ENCODE measurements at regions of chr4 and their contacts with region 1.

Region 1: GRCh38 chr4:165327211-165328100 is at the start of gene MSMO1:
- DNase-seq: peak; percentile 99
- H3K4me3 ChIP-seq: peak within 1 kb of the TSS; percentile 90
- H3K27ac ChIP-seq: peak within 1 kb of the TSS; percentile 73
- H3K4me1 ChIP-seq: peaks cover 46% of the 10 kb centered on the region
- CTCF ChIP-seq: no peak
- total RNA-seq, gene MSMO1: 36.3 and 41.6 TPM in 2 replicates

Region 2: GRCh38 chr4:164320847-164321246 is 1006.6 kb before region 1 on chr4:
- CTCF ChIA-PET with region 1: no interaction called
- POLR2A ChIA-PET with region 1: no interaction called
- intact Hi-C with region 1: no loop called
- DNase-seq: no peak
- H3K4me3 ChIP-seq: no peak overlapping the region
- H3K27ac ChIP-seq: no peak overlapping the region
- H3K4me1 ChIP-seq: no peaks in the 10 kb centered on the region
- CTCF ChIP-seq: peak; percentile 23; the same call in 1 of the 2 replicates

Region 3: DNA sequence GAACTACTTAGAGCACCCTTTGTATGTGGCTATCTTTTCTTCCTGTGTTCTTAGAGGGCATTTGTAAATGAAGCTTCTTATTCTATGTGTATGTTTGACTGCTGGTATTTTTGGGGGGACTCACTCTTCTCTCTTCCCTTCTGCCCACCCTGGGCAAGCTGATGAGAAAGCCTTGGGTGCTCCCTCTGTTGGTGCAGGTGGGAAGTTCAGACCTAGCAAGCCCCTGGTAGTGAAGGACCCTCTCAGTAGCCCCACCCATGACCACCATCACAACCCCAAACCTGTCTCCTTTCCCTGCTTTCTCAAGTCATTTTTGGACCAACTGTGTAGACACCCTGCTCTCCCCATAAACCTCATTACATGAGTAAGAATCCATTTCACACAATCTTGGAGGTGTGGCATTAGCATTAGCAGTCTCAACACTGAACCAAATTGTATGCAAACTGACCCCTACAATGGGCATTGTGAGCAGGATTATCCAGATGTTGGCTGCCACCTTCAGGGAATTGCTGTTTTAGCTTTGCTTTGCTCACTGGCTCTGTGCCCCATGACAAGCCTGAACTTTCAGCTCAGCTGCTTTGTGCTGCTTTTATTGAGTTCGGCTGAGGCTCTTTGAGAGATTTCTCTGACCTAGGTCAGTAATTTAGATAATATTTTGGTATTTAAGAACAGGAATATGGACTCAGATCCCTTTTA is 377.9 kb before region 1 on chr4:
- CTCF ChIA-PET with region 1: no interaction called
- POLR2A ChIA-PET with region 1: no interaction called
- intact Hi-C with region 1: loop called (anchors 10 kb)
- DNase-seq: peak; percentile 44
- H3K4me3 ChIP-seq: peak overlapping the region; percentile 12
- H3K27ac ChIP-seq: peak overlapping the region; percentile 41
- H3K4me1 ChIP-seq: peaks cover 38% of the 10 kb centered on the region
- CTCF ChIP-seq: peak; percentile 72

Region 4: DNA sequence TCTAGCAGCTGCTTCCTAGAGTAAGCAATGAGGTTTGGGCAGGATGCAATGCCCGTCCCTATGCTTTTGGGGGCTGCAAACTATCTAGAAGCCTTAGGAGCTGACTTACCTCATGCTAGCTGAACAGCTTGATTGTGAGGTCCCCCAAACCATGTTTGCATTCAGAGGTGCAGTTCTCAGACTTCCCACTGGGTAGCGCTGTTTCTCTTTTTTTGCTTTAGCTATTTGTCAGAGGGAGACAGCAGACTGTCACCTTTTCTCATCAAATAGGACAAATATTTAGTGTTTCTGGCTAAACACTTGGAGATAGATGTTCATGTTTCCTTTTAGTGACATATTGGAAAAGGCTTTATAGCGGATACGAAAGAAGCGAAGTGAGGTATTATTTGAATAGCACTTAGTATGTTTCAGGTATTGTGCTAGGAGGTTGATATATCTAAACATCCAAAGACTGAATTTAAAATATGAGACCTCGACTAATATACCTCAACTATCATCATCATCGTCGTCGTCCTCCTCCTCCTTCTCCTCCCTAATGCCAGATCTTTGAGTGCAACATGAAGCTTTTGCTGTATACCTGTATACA is 196.1 kb before region 1 on chr4:
- CTCF ChIA-PET with region 1: interaction called, 5 read pairs
- POLR2A ChIA-PET with region 1: interaction called, 5 read pairs
- intact Hi-C with region 1: loop called (anchors 1 kb)
- DNase-seq: peak; percentile 71
- H3K4me3 ChIP-seq: no peak overlapping the region
- H3K27ac ChIP-seq: no peak overlapping the region
- H3K4me1 ChIP-seq: peaks cover 13% of the 10 kb centered on the region
- CTCF ChIP-seq: peak; percentile 99

Region 5: GRCh38 chr4:165207431-165208220 is 119.8 kb before region 1 on chr4 and contains the start of gene KLHL2:
- CTCF ChIA-PET with region 1: no interaction called
- POLR2A ChIA-PET with region 1: interaction called, 6 read pairs
- intact Hi-C with region 1: loop called (anchors 1 kb)
- DNase-seq: peak; percentile 86
- H3K4me3 ChIP-seq: peak within 1 kb of the TSS; percentile 100
- H3K27ac ChIP-seq: peak within 1 kb of the TSS; percentile 23
- H3K4me1 ChIP-seq: peaks cover 41% of the 10 kb centered on the region
- CTCF ChIP-seq: 0 out of 2 replicates have a peak, but pooled peaks have one; percentile 19
- total RNA-seq, gene KLHL2: 21.9 and 27.9 TPM in 2 replicates

Region 6: DNA sequence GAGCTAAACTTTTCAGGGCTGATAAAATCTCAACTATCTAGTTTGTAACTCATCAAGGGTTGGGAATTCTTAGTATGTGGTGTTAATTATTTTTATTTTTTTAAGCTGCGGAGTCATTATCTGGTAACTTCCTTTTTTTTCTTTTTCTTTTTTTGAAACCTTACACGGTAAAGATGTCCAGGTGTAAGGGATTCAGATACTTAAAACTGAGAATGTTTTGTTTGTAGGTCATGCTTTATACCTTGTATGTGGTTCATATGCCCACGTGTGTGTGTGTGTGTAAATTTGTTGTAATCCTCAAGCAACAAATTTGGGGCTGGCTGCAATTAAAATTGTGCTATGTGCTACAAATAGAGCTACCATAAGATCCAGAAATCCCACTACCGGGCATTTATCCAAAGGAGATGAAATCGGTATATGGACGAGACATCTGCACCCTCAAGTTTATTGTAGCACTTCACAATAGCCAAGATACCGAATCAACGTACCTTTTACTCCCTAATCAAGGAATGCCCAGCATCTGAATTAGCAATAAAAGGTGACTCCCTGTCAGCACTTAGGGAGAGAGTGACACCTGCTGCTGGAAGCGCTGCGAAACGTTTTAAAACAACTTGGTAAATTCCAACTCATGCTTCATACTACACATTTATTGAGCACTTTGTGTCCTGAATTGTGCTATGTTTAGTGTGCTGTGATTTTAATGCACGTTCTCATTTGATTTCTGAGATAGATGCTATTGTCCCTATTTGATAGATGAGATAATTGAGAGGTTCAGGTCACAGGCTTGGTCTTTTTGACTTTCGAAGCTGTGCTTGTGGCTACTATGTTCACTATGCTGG is 16.1 kb after region 1 on chr4:
- CTCF ChIA-PET with region 1: interaction called, 4 read pairs
- POLR2A ChIA-PET with region 1: interaction called, 13 read pairs
- intact Hi-C with region 1: no loop called
- DNase-seq: peak; percentile 42
- H3K4me3 ChIP-seq: no peak overlapping the region
- H3K27ac ChIP-seq: no peak overlapping the region
- H3K4me1 ChIP-seq: no peaks in the 10 kb centered on the region
- CTCF ChIP-seq: peak; percentile 78